ENCODE measurements at regions of chr10 and their contacts with region 1.

Region 1: DNA sequence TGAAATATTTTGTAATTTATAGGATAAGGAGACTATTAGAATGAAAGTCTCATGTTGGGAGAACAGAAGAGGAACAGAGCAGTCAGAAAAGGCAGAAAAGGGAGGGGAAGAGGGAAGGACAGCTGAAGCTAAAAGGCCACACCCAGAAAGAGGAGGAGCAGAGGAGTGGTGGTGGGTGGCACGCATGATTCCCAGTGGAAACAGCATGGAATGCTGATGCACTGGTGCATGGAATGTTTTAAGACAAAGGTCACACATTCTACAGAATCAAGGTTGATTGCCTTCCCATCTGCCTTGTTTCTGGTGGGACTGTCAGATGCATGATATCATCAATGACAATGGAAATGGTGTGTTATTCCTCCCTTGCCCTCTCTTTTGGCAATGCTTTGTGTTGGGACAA is 285.4 kb upstream of the MKI67 start:
- DNase-seq: no peak
- H3K4me3 ChIP-seq: no peak overlapping the region
- CTCF ChIP-seq: no peak

Region 2: DNA sequence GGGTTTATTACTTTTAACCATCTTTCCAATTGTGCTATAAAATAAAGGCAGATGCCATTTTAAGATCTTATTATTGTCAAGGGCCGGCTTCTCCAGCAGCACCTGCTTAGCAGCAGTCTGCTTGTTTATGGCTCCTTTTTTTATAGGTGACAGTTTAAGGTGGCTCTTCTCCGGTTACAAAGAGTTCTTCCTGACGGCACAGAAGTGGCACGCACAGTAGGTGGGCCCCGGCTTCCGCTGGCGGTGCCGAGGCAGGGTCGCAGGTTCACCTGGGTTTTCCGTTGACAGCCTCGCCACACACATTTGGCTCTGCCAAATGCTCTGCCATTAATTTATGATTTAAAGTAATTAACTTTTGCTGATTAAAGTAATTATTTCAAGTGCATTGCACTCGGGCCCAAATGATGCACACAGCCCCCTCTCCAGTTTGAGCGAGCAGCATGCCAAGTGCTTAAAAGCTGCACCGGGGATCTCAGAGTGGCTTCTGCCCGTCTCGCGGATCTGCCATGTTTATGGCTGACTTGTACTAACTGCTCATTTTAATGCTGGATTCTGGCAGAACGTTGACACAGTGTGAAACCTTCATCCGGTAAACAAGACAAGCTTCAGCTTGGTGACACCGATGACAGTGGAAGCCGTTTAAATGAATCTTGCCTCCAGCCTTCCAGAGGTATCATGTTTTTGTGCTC is 69.7 kb after region 1 on chr10:
- in situ Hi-C with region 1: loop called (anchors 5 kb)
- DNase-seq: no peak
- H3K4me3 ChIP-seq: no peak overlapping the region
- CTCF ChIP-seq: no peak